Lower leg skin (tissue), 4 donors: ENCODE measurements at regions of chr6 and their contacts with region 1.

Region 1: GRCh38 chr6:72769459-72770125 is 147.7 kb downstream of the KCNQ5 start:
- DNase-seq: no peak
- H3K4me3 ChIP-seq: no peak overlapping the region
- CTCF ChIP-seq: no peak
- POLR2A ChIP-seq: no peak

Region 2: DNA sequence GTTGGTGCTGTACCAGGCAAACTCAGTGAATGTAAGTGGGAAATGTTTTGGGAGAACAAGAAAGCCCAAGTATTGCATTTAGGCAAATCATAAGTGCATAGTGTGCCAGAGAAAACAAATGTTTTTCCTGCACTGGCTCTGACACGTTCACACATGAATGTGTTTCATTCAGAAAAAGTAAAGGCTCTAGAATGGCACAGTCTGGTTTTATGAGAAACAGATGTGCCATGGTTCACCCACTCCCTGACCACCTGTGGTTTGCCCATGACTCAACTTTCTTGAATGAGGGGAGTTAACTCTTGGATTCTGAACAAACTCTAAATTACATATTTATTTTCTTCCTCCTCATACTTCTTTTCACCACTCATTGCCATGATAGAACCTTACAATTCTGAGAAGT is 20.8 kb before region 1 on chr6:
- intact Hi-C with region 1: loop called (anchors 1 kb)
- DNase-seq: no peak
- H3K4me3 ChIP-seq: no peak overlapping the region
- CTCF ChIP-seq: no peak
- POLR2A ChIP-seq: no peak

Region 3: GRCh38 chr6:73017476-73017875 is 247.9 kb after region 1 on chr6:
- intact Hi-C with region 1: no loop called
- DNase-seq: no peak
- H3K4me3 ChIP-seq: no peak overlapping the region
- CTCF ChIP-seq: no peak
- POLR2A ChIP-seq: no peak